Activated T-helper 1 cell treated with anti-CD3 and anti-CD28 coated beads, Interleukin-12 subunit alpha, Interleukin-12 subunit beta, Interleukin-2, Interleukin-4 antibody, amounts not matched to agents 30 ng/mL and 10 ng/mL and 1 ng/mL, durations not matched to agents 14 hours and 24 hours and 36 hours (primary cell): ENCODE measurements at regions of chrX and their contacts with region 1.

Region 1: DNA sequence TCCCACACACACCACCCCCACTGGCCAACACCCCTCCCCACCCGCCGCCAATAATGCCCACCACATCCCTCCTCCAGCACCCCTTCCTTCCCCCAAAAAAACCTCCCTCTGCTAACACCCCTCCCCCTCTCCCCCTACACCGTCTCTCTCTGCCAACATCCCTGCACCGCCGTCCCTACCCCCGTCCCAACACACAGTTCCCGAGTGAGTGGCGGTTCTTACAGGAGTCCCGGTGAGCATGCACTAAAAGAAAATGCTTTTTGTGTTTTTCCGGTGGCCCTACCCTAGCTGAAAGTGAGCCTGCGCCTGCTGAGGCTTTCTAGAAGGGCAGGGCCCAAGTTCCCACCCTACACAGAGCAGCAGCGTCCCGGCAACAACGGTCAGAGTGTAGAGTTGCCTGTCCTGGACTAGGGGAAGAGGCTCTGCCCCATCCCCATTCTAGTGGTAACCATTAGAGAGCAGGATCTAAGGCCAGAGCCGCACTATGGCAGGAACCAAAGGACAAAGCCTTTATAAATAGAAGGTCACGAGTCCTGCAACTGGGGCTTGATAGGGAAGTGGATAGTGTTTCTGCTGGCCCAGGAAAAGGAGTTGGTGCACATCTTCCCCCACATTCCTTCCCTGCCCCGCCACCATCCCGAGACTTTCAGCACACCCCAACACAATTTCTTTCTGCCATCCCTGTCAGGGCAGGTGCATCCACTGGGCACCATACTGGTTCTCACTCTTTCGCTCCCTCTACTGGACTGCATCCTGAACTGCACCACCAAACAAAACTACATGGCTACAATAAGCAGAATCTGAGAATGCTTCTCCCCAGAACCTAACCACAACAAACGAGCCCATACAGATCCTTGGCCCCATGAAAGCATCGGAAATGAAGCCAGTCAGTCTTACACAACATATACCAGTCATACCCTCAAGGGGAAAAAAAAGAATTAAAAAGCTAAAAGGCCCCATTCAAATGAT is 78.1 kb upstream of the PAGE3 start:
- DNase-seq: peak; percentile 20
- H3K4me3 Mint-ChIP-seq: peak overlapping the region; percentile 37
- H3K27ac Mint-ChIP-seq: peak overlapping the region; percentile 5
- H3K4me1 Mint-ChIP-seq: peaks cover 16% of the 10 kb centered on the region
- H3K27me3 Mint-ChIP-seq: no peaks in the 10 kb centered on the region

Region 2: GRCh38 chrX:54808605-54809483 is 534.0 kb before region 1 on chrX:
- intact Hi-C with region 1: loop called (anchors 5 kb)
- DNase-seq: peak; percentile 88
- H3K4me3 Mint-ChIP-seq: peak overlapping the region; percentile 89
- H3K27ac Mint-ChIP-seq: peak overlapping the region; percentile 85
- H3K4me1 Mint-ChIP-seq: peaks cover 17% of the 10 kb centered on the region
- H3K27me3 Mint-ChIP-seq: peaks cover 10% of the 10 kb centered on the region

Region 3: GRCh38 chrX:54891573-54891972 is 451.2 kb before region 1 on chrX:
- intact Hi-C with region 1: loop called (anchors 5 kb)
- DNase-seq: peak; percentile 2
- H3K4me3 Mint-ChIP-seq: no peak overlapping the region
- H3K27ac Mint-ChIP-seq: no peak overlapping the region
- H3K4me1 Mint-ChIP-seq: no peaks in the 10 kb centered on the region
- H3K27me3 Mint-ChIP-seq: peaks cover 5% of the 10 kb centered on the region

Region 4: GRCh38 chrX:55033429-55033828 is 309.4 kb before region 1 on chrX:
- intact Hi-C with region 1: no loop called
- DNase-seq: no peak
- H3K4me3 Mint-ChIP-seq: no peak overlapping the region
- H3K27ac Mint-ChIP-seq: no peak overlapping the region
- H3K4me1 Mint-ChIP-seq: no peaks in the 10 kb centered on the region
- H3K27me3 Mint-ChIP-seq: no peaks in the 10 kb centered on the region

Region 5: DNA sequence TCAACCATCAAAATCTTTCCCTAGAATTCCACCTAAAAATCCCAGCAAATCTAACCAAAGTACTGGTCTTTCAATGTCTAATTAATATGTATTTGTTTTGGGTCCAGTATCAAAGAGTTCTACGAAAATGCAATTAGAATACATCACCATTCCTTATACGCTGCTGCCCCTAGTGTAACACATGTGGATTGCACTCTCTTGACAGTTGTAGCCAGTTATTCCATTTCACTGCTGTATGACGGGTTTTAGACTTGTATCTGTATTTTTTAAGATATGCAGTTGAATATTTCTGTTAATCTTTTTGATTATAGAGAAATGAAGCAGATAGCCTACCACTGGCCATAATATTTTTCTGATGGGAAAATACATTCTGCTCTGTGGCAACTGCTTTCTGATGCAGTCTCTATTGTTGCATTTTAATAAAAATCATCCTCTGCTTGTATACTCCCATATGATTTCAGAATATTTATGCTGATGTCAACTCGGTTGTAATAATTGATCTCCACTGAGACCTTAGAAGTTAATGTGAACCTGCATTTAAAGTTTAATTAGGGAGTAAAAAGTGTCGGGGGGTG is 285.1 kb before region 1 on chrX:
- intact Hi-C with region 1: loop called (anchors 5 kb)
- DNase-seq: peak; percentile 0
- H3K4me3 Mint-ChIP-seq: peak overlapping the region; percentile 58
- H3K27ac Mint-ChIP-seq: no peak overlapping the region
- H3K4me1 Mint-ChIP-seq: peaks cover 12% of the 10 kb centered on the region
- H3K27me3 Mint-ChIP-seq: peaks cover under 1% of the 10 kb centered on the region

Region 6: GRCh38 chrX:55135171-55135570 is 207.6 kb before region 1 on chrX:
- intact Hi-C with region 1: loop called (anchors 1 kb)
- DNase-seq: peak; percentile 1
- H3K4me3 Mint-ChIP-seq: no peak overlapping the region
- H3K27ac Mint-ChIP-seq: no peak overlapping the region
- H3K4me1 Mint-ChIP-seq: no peaks in the 10 kb centered on the region
- H3K27me3 Mint-ChIP-seq: no peaks in the 10 kb centered on the region